ENCODE measurements at regions of chr2 and their contacts with region 1.

Region 1: GRCh38 chr2:187499941-187500532 is 52.0 kb upstream of the CALCRL start:
- DNase-seq: peak in 5 of 9 donors; percentile 23 to 40 (median 34)
- ATAC-seq: peak; percentile 60
- H3K4me3 ChIP-seq: no peak overlapping the region
- H3K4me3 Mint-ChIP-seq: no peak overlapping the region
- H3K27ac ChIP-seq: no peak overlapping the region
- H3K27ac Mint-ChIP-seq: no peak overlapping the region
- H3K4me1 ChIP-seq: no peaks in the 10 kb centered on the region
- H3K4me1 Mint-ChIP-seq: peaks cover 0 to 8% (median 7%) of the 10 kb centered on the region in 7 donors
- H3K27me3 ChIP-seq: peaks cover 0 to 2% of the 10 kb centered on the region in 2 donors
- H3K27me3 Mint-ChIP-seq: peaks cover 0 to 9% (median 4%) of the 10 kb centered on the region in 5 donors

Region 2: DNA sequence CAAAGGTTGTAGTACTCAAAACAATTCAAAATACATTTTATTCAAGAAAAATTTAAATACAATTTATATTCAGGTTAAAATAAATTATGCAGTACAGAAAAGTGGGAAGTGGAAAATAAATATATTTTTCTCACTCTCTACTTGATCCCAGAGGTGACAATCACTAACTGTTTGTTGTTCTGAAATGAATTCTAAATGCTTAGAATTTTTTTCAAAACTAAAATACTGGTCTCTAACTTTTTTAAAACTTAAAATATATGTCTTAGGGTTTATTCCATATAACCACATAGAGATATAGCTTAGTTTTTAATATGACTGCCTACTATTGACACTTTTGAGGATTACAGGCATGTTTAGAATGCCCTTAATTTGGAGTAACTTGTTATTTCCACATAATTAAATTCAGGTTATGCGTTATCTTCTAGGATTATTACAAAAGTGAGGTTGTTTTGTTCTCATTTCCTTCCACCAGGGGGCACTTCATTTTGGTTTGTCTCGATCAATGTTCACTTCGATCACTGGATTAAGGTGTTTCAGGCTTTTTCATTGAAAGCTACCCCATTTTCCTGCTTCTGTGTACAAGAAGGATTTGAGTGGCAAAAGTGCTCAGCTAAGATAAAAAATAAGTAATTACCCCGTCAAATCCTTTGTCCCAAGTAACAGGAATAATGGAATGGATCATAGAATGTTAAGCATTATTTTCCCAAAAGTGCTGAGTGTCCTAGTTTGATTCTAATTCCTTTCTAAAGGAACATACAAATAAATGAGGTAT is 81.3 kb after region 1 on chr2:
- CTCF ChIA-PET with region 1: no interaction called
- POLR2A ChIA-PET with region 1: no interaction called
- intact Hi-C with region 1: loop called (anchors 1 kb)
- DNase-seq: peak in 5 of 9 donors; percentile 6 to 37 (median 18)
- ATAC-seq: no peak
- H3K4me3 ChIP-seq: no peak overlapping the region
- H3K4me3 Mint-ChIP-seq: no peak overlapping the region
- H3K27ac ChIP-seq: no peak overlapping the region
- H3K27ac Mint-ChIP-seq: no peak overlapping the region
- H3K4me1 ChIP-seq: no peaks in the 10 kb centered on the region
- H3K4me1 Mint-ChIP-seq: peaks cover 0 to 8% (median 7%) of the 10 kb centered on the region in 7 donors
- H3K27me3 ChIP-seq: no peaks in the 10 kb centered on the region
- H3K27me3 Mint-ChIP-seq: peaks cover 0 to 5% (median 0%) of the 10 kb centered on the region in 5 donors

Region 3: GRCh38 chr2:187842978-187843847 is 343.2 kb after region 1 on chr2:
- CTCF ChIA-PET with region 1: no interaction called
- POLR2A ChIA-PET with region 1: no interaction called
- intact Hi-C with region 1: loop called in 1 of 2 experiments (anchors 1 kb)
- DNase-seq: no peak
- ATAC-seq: no peak
- H3K4me3 ChIP-seq: no peak overlapping the region
- H3K4me3 Mint-ChIP-seq: no peak overlapping the region
- H3K27ac ChIP-seq: no peak overlapping the region
- H3K27ac Mint-ChIP-seq: no peak overlapping the region
- H3K4me1 ChIP-seq: no peaks in the 10 kb centered on the region
- H3K4me1 Mint-ChIP-seq: no peaks in the 10 kb centered on the region
- H3K27me3 ChIP-seq: no peaks in the 10 kb centered on the region
- H3K27me3 Mint-ChIP-seq: peaks cover 0 to 3% (median 0%) of the 10 kb centered on the region in 5 donors

Region 4: GRCh38 chr2:188369365-188369764 is 869.3 kb after region 1 on chr2:
- CTCF ChIA-PET with region 1: no interaction called
- POLR2A ChIA-PET with region 1: no interaction called
- intact Hi-C with region 1: loop called in 1 of 2 experiments (anchors 2 kb)
- DNase-seq: peak in 2 of 9 donors; percentile 2 to 8
- ATAC-seq: no peak
- H3K4me3 ChIP-seq: no peak overlapping the region
- H3K4me3 Mint-ChIP-seq: no peak overlapping the region
- H3K27ac ChIP-seq: no peak overlapping the region
- H3K27ac Mint-ChIP-seq: no peak overlapping the region
- H3K4me1 ChIP-seq: no peaks in the 10 kb centered on the region
- H3K4me1 Mint-ChIP-seq: no peaks in the 10 kb centered on the region
- H3K27me3 ChIP-seq: no peaks in the 10 kb centered on the region
- H3K27me3 Mint-ChIP-seq: no peaks in the 10 kb centered on the region